Ascending aorta (tissue), 2 donors: ENCODE measurements at regions of chr10 and their contacts with region 1.

Region 1: DNA sequence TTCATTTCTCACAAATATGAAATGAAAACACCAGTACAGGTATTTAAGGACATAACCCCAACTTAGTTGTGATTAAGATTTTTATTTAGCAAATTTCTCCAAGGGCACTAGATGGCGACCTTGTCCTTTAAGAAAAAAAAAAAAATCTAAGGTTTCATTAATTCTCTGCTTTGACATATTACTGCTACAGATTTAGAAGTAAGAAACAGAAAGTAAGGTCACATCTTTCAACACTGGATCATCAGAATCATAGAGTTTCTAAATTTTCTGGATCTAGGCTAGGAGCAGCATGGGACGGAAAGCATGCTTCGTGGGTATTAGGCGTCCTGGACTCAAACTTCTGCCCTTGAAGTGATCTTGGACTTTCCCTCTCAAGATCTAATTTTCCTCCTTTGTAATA is 85.5 kb upstream of the PRKG1 start:
- DNase-seq: no peak
- H3K4me3 ChIP-seq: peak overlapping the region; percentile 46 to 95
- H3K27ac ChIP-seq: peak overlapping the region in 1 of 2 donors; percentile 38
- H3K4me1 ChIP-seq: peaks cover 0 to 3% of the 10 kb centered on the region in 2 donors
- H3K27me3 ChIP-seq: no peaks in the 10 kb centered on the region
- CTCF ChIP-seq: peak in 2 of 3 experiments; percentile 67 to 71

Region 2: DNA sequence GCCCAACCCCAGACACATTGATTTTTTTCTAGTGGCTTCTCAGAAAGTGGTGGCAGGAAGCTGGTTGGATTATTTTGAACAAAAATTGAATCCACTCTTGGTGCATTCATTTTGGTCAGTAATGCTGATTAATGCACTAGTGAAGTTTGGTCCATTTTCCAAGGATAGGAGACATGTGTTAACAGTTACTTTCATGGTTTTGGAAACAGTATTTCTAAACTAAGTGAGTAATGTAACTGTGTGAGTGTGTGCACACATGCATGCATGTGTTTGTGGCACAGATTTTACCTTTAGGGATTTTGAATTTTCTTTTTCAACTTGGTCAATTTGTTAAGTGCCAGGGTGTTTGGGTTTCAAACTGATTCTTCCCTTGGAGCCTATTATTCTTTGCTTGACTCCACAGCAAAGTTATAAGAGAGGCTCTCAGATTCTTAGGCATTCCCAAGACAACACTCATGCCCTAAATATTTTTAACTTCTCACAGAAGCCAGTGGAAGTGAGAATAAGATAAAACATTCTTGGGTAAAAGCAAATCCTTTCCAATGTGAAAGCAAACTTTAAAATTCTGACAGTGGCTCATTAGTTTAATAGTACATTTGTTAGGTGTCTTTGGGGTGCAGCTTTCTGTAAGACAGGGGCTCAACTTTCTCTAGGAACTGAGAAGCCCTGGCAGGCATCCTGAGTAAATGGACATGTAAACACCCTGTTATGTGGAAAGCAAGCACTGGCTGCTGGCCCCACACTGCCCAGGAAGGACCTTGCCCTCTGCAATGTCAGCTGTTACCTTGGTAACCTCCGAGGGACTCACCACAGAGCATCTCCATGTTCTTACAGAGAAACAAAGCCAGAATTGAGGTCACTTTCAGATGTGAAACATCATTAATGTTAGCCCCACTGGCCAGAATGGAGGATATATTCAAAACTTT is 180.7 kb before region 1 on chr10:
- intact Hi-C with region 1: no loop called
- DNase-seq: no peak
- H3K4me3 ChIP-seq: no peak overlapping the region
- H3K27ac ChIP-seq: no peak overlapping the region
- H3K4me1 ChIP-seq: no peaks in the 10 kb centered on the region
- H3K27me3 ChIP-seq: no peaks in the 10 kb centered on the region
- CTCF ChIP-seq: no peak

Region 3: DNA sequence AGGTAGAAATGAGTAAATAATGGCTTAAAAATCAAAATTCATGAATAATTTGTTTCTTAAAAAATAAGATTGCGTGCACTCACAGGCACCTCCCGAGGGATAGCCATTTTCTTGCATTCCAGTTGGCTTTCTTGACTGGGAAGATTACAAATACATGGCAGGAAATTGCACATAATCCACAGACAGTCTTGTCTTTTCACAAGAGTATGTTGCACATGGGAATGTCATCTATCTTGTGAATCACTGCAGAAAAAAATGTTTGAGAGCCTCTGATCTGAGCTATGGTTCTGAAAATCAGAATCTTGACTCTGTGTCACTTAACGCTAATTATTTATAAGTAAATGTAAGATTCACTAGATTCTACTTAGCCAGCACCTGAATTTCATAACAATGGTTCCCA is 11.4 kb after region 1 on chr10:
- intact Hi-C with region 1: no loop called
- DNase-seq: no peak
- H3K4me3 ChIP-seq: no peak overlapping the region
- H3K27ac ChIP-seq: peak overlapping the region; percentile 74 to 85
- H3K4me1 ChIP-seq: peaks cover 0 to 41% of the 10 kb centered on the region in 2 donors
- H3K27me3 ChIP-seq: no peaks in the 10 kb centered on the region
- CTCF ChIP-seq: no peak

Region 4: GRCh38 chr10:51010977-51011376 is 22.2 kb after region 1 on chr10:
- intact Hi-C with region 1: no loop called
- DNase-seq: no peak
- H3K4me3 ChIP-seq: no peak overlapping the region
- H3K27ac ChIP-seq: peak overlapping the region in 1 of 2 donors; percentile 5
- H3K4me1 ChIP-seq: peaks cover 11 to 37% of the 10 kb centered on the region in 2 donors
- H3K27me3 ChIP-seq: no peaks in the 10 kb centered on the region
- CTCF ChIP-seq: peak; percentile 71 to 80 (median 75)

Region 5: DNA sequence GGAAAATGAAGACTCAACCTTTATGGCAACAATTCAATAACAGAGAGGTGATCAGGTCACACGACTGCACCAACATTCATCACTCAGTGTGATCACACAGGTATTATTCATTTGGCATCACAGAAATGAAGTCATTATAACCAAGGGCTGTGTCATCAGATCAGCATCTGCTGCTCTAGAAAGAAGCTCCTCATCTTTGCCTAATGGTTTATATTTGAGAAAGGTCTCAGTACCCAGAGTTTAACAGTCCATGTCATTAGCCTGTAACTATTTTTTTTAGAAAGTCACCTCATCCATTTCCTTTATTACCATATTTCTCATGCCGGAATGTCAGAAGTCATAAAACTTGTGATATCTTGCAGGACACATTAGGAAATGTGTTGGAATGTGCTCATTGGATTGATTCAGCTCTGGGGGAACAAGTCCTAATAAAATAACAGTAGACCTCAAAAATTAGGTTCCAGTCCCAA is 40.4 kb after region 1 on chr10:
- intact Hi-C with region 1: no loop called
- DNase-seq: no peak
- H3K4me3 ChIP-seq: no peak overlapping the region
- H3K27ac ChIP-seq: peak overlapping the region; percentile 80 to 86
- H3K4me1 ChIP-seq: peaks cover 11 to 69% of the 10 kb centered on the region in 2 donors
- H3K27me3 ChIP-seq: no peaks in the 10 kb centered on the region
- CTCF ChIP-seq: no peak

Region 6: GRCh38 chr10:51886438-51887068 is 897.8 kb after region 1 on chr10:
- intact Hi-C with region 1: loop called (anchors 10 kb)
- DNase-seq: no peak
- H3K4me3 ChIP-seq: no peak overlapping the region
- H3K27ac ChIP-seq: peak overlapping the region; percentile 46 to 48
- H3K4me1 ChIP-seq: peaks cover 3 to 30% of the 10 kb centered on the region in 2 donors
- H3K27me3 ChIP-seq: no peaks in the 10 kb centered on the region
- CTCF ChIP-seq: no peak

Region 7: GRCh38 chr10:52004342-52004949 is 1015.7 kb after region 1 on chr10:
- intact Hi-C with region 1: loop called (anchors 10 kb)
- DNase-seq: no peak
- H3K4me3 ChIP-seq: no peak overlapping the region
- H3K27ac ChIP-seq: no peak overlapping the region
- H3K4me1 ChIP-seq: peaks cover 3 to 34% of the 10 kb centered on the region in 2 donors
- H3K27me3 ChIP-seq: no peaks in the 10 kb centered on the region
- CTCF ChIP-seq: peak; percentile 33 to 63 (median 53)

Region 8: DNA sequence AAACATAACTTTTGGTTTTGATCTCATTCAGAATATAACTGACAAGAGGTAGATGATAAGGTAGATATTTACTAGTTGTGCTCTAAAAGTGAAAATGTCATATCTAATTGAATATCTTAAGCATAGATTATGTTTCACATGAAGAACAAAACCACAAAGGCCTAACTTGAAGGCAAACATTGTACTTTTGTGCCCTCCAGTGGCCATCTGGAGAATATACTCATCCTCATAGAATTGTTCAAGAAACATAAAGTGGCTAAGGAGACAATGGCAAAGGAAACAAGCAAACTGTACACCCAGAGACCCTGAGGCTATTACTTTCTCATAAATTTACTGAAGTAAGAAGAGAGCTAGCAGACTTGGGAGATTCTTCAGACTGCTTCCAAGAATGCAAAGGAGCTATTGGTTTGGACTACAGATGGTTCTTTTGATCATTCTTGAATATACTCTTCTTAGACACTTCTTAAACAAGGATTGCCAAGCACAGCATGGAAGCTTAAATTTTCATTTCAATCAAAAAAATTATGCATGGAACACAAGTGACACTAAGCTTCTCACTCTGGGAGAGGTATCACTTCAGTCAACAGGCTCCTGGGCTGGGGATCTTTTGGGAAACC is 1227.1 kb after region 1 on chr10:
- intact Hi-C with region 1: loop called (anchors 5 kb)
- DNase-seq: no peak
- H3K4me3 ChIP-seq: no peak overlapping the region
- H3K27ac ChIP-seq: peak overlapping the region in 1 of 2 donors; percentile 63
- H3K4me1 ChIP-seq: peaks cover 4 to 22% of the 10 kb centered on the region in 2 donors
- H3K27me3 ChIP-seq: no peaks in the 10 kb centered on the region
- CTCF ChIP-seq: peak; percentile 66 to 68 (median 67)

Region 9: DNA sequence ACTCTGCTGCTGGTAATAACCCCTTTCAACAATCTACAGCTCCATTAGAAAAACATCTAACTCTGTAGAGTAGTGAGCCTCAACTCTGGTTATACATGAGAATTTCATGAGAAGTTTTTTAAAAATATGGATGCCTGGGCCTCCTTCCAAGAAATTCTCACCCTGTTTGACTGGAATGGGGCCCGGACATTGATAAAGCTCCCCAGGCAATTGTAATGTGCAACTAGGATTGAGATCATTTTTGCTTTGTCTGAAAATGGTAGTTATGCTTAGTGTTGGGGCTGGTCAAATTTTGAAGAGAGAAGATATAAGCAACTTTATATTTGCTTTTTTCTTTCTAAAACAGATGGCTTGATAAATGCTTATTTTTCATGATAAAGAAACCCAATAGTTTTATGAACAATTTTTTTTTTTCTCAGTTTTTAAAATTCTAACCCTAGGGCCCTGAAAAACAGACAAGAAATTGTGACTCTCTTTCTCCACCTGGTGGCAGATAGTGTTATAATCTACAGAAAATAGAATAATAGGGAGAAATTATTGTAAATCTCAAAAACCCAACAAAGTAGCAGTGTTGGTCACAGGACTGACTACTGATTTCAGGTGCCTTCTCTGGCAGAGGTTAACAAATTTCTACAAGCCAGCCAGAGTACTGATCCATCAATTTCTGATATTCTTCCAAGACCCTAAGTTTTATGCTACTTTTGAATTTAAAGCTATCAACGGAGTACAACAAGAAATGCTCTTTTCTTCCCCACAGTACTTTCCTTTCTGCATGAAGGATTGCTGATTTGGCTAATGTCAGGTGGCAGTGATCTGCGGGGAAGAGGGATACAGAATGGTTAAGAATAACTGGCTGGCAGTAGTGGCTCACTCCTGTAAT is 1500.1 kb after region 1 on chr10:
- intact Hi-C with region 1: loop called (anchors 5 kb)
- DNase-seq: no peak
- H3K4me3 ChIP-seq: no peak overlapping the region
- H3K27ac ChIP-seq: no peak overlapping the region
- H3K4me1 ChIP-seq: no peaks in the 10 kb centered on the region
- H3K27me3 ChIP-seq: no peaks in the 10 kb centered on the region
- CTCF ChIP-seq: peak; percentile 55 to 65 (median 56)